A673 (cell line): ENCODE measurements at regions of chr2 and their contacts with region 1.

Region 1: GRCh38 chr2:67585400-67585799 is 188.3 kb downstream of the ETAA1 start:
- DNase-seq: no peak
- H3K4me3 ChIP-seq: no peak overlapping the region
- H3K27ac ChIP-seq: no peak overlapping the region
- H3K4me1 ChIP-seq: no peaks in the 10 kb centered on the region
- H3K27me3 ChIP-seq: no peaks in the 10 kb centered on the region
- CTCF ChIP-seq: no peak

Region 2: GRCh38 chr2:66127061-66127460 is 1458.3 kb before region 1 on chr2:
- CTCF ChIA-PET with region 1: no interaction called
- POLR2A ChIA-PET with region 1: interaction called, 17 read pairs
- intact Hi-C with region 1: no loop called
- DNase-seq: no peak
- H3K4me3 ChIP-seq: no peak overlapping the region
- H3K27ac ChIP-seq: no peak overlapping the region
- H3K4me1 ChIP-seq: no peaks in the 10 kb centered on the region
- H3K27me3 ChIP-seq: no peaks in the 10 kb centered on the region
- CTCF ChIP-seq: no peak